Aorta (tissue), 5 donors: ENCODE measurements at regions of chr4 and their contacts with region 1.

Region 1: GRCh38 chr4:52643785-52644244 is 15.3 kb downstream of the USP46 start:
- DNase-seq: peak; percentile 88 to 92
- ATAC-seq: peak; percentile 61
- H3K4me3 ChIP-seq: no peak overlapping the region
- H3K27ac ChIP-seq: peak overlapping the region; percentile 69
- H3K4me1 ChIP-seq: peaks cover 10 to 19% of the 10 kb centered on the region in 2 donors
- H3K27me3 ChIP-seq: no peaks in the 10 kb centered on the region

Region 2: DNA sequence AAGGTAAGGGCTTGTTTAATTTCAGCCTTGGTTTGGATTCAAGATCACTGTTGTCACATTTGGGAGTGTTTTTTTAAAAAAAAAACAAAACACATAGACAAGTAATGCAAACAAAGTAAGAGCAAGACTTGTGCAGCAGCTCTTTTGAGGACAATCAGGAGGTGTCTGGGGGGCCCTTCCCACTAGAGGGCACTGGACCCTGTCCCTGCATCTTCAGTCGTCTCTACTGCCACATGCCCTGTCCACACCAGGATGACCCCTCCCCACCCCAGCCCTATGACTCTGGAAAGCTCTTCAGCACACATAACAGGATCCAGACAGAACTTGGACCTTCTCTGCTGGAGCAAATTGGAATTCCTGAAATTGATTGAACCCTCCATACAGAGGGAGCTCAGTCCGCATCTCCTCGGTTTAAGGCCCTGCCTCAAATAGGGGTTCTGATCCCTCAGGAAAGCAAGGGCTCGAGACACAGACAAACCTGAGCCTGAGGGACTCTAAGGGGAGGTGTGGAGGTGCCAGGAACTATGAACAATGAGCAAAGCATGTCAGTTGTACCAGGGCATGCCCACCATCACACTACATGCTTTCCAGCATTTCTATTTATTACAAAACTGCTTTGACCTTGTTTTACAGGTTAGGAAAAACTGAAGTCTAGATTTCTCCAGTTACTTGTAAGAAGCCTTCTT is 55.6 kb before region 1 on chr4:
- intact Hi-C with region 1: loop called in 1 of 2 experiments (anchors 5 kb)
- DNase-seq: peak in 1 of 2 donors; percentile 54
- ATAC-seq: peak; percentile 49
- H3K4me3 ChIP-seq: no peak overlapping the region
- H3K27ac ChIP-seq: peak overlapping the region; percentile 44 to 47
- H3K4me1 ChIP-seq: peaks cover 8 to 13% of the 10 kb centered on the region in 2 donors
- H3K27me3 ChIP-seq: no peaks in the 10 kb centered on the region

Region 3: DNA sequence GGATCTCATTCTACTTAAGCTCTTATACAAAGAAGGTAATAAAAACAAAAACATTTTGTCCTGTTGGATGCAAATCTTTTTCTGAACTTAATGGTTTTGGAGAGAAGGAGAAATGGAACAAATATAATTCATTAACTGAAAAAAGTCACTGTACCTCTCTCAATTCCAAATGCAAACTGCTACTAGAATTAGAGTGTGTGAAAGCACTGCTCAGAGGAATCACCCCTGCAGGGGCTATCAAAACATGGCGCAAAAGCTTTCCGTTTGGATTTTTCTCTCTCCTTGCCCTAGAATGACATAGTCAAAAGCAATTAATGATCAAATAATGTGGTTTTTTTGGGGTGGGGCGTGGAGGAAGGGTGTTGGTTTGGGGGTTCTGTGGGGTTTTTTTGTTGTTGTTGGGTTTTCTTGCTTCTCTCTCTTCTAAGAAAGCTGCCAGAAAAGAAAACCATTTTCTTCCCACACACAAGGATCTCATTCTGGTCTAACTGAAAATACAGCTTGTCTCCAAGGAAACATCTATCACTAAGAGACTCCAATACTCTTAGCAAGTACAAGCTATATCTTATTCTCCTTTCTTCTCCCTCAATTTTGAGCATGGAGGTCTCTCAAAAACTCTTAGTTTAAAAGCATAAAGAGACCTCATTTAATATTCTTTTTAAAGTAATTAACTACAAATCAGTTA is 26.3 kb before region 1 on chr4:
- intact Hi-C with region 1: no loop called
- DNase-seq: no peak
- ATAC-seq: no peak
- H3K4me3 ChIP-seq: no peak overlapping the region
- H3K27ac ChIP-seq: no peak overlapping the region
- H3K4me1 ChIP-seq: peaks cover 7 to 8% of the 10 kb centered on the region in 2 donors
- H3K27me3 ChIP-seq: no peaks in the 10 kb centered on the region